Thyroid gland (tissue), 4 donors: ENCODE measurements at regions of chr17 and their contacts with region 1.

Region 1: GRCh38 chr17:35537601-35538141 is at the start of gene SLFN12L:
- DNase-seq: no peak
- H3K4me3 ChIP-seq: no peak within 1 kb of the TSS
- H3K27ac ChIP-seq: peak within 1 kb of the TSS; percentile 15 to 36 (median 25)
- H3K4me1 ChIP-seq: peaks cover 0 to 3% of the 10 kb centered on the region in 2 donors
- H3K27me3 ChIP-seq: no peaks in the 10 kb centered on the region
- CTCF ChIP-seq: no peak
- POLR2A ChIP-seq: no peak
- total RNA-seq, gene SLFN12L: 1.2 to 3.5 (median 1.6) TPM

Region 2: GRCh38 chr17:35170968-35171771 is 366.5 kb before region 1 on chr17:
- intact Hi-C with region 1: loop called (anchors 10 kb)
- DNase-seq: no peak
- H3K4me3 ChIP-seq: no peak overlapping the region
- H3K27ac ChIP-seq: no peak overlapping the region
- H3K4me1 ChIP-seq: no peaks in the 10 kb centered on the region
- H3K27me3 ChIP-seq: no peaks in the 10 kb centered on the region
- CTCF ChIP-seq: peak in 1 of 6 experiments; percentile 8
- POLR2A ChIP-seq: no peak

Region 3: DNA sequence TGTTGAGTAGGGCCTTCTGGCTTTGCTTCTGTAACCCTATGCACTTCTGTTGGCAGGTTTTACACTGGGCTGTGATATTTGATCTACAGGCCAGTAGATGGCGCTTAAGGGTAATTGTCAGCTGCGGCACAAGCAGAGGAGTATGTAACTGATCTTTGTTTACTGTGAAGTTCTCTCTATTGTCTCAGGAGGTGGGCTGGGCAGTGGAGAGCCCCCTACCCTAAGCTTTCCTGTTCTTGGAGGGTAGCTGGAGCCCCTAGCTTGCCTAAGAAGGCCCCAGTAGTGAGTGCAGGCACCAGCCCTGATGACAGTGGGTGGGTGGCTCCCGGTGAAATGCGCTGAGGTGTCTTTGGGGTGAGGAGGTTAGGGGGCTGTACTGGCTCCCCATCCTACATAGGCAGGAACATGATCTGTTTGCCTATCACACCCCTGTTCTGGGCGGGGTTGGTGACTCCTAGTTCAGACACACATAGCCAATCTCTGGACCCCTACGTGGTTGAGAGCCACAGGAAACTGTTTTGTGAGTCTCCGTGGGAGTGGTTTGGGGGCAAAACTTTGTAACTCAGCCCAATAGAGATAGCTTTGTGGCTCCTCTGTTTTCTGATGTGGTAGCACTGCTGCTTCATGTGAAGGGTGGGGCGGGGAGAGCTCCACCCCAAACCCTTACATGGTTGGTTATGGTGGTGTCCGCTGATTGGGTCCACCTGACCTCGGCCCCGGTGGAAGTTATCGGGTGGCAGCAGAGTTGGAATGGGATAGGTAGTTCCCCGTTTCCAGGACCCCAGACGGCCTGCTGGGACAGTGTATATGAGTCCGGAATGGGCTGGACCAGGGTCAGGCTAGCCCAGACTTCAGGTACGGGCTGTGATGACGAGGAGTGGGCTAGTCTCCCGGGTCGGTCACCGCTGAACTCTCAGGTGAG is 224.6 kb before region 1 on chr17:
- intact Hi-C with region 1: loop called (anchors 2 kb)
- DNase-seq: peak; percentile 33 to 40
- H3K4me3 ChIP-seq: peak overlapping the region in 1 of 3 donors; percentile 19
- H3K27ac ChIP-seq: peak overlapping the region; percentile 8 to 41 (median 19)
- H3K4me1 ChIP-seq: peaks cover 0 to 23% of the 10 kb centered on the region in 2 donors
- H3K27me3 ChIP-seq: no peaks in the 10 kb centered on the region
- CTCF ChIP-seq: peak; percentile 39 to 81 (median 73)
- POLR2A ChIP-seq: no peak

Region 4: GRCh38 chr17:35587074-35587971 is 49.7 kb after region 1 on chr17 and contains the start of gene AP2B1:
- intact Hi-C with region 1: no loop called
- DNase-seq: peak; percentile 86 to 89
- H3K4me3 ChIP-seq: peak within 1 kb of the TSS; percentile 69 to 100 (median 94)
- H3K27ac ChIP-seq: peak within 1 kb of the TSS; percentile 81 to 89 (median 86)
- H3K4me1 ChIP-seq: peaks cover 8 to 16% of the 10 kb centered on the region in 2 donors
- H3K27me3 ChIP-seq: no peaks in the 10 kb centered on the region
- CTCF ChIP-seq: peak in 1 of 6 experiments; percentile 46
- POLR2A ChIP-seq: peak in 1 of 2 donors; percentile 76
- total RNA-seq, gene AP2B1: 105 to 162 (median 122) TPM